Adrenal gland (tissue), 19 donors: ENCODE measurements at regions of chr15 and their contacts with region 1.

Region 1: DNA sequence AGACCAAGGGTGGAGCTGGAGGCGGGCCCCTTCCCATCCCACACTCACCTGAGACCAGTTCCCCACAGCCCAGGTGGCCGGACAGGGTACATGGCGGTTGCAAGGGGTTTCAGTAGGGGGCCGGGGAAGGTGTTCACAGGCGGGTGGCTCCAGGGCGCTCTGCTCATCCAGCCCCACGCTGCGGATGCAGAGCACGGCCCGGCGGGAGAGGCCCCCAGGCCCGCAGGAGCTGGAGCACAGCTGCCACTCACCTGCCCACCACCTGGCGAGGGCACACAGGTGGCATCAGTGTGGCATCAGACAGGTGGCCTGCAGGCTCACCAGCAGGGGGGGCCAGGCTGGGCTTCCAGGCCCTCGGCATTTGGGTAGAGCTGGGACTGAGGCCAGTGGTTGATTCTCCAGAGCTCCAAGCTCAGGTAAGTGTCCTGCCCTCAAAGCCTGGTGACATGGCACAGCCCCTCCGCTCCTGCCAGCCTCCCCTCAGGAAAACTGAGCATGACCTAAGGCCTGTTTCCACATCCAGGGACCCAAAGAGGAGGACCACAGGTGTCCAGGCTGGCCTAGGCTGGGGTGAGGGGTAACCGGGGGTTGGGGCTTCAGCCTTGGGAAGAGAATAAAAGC is 43.8 kb downstream of the ADAMTS7 start:
- DNase-seq: peak in 3 of 7 donors; percentile 10 to 17 (median 15)
- H3K4me3 ChIP-seq: no peak overlapping the region
- H3K27ac ChIP-seq: no peak overlapping the region
- H3K4me1 ChIP-seq: no peaks in the 10 kb centered on the region
- H3K27me3 ChIP-seq: no peaks in the 10 kb centered on the region
- CTCF ChIP-seq: no peak
- POLR2A ChIP-seq: no peak

Region 2: GRCh38 chr15:78103748-78104479 is 663.5 kb before region 1 on chr15:
- intact Hi-C with region 1: no loop called
- DNase-seq: peak in 3 of 7 donors; percentile 30 to 39 (median 34)
- H3K4me3 ChIP-seq: no peak overlapping the region
- H3K27ac ChIP-seq: peak overlapping the region in 2 of 5 donors; percentile 21 to 38
- H3K4me1 ChIP-seq: peaks cover 0 to 15% of the 10 kb centered on the region in 2 donors
- H3K27me3 ChIP-seq: no peaks in the 10 kb centered on the region
- CTCF ChIP-seq: no peak
- POLR2A ChIP-seq: no peak

Region 3: DNA sequence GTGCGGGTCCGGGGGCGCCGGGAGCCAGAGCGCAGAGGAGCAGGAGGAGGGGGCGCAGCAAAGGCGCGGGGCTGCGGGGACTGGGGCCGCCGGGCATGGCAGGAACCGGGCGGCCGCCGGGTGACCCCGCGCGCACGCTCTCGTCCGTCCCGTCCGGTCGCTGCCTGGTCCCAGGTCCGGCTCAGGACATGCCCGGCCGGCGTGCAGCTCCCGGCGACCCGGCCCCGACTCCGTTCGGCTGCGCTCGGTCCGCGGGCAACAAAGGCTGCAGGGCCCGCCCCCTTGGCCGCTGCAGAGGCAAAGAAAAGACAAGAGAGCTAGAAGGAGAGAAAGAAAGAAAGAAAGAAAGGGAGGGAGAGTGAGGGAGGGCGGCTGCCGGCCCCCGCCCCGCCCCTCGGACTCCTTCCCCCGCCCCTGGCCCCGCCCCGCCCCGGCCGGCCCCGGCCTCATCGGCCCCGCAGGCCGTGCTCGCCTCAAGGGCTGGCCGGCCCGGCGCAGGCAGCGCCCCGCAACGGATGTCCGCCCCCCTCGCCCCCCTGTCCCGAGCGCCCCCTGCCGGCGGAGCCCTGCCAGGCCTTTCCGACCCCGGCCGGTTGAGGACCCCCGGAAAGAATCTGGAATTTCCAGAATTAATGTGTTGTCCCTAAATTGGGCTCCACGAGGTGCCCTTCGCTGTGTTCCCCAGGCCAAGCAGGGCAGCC is 43.8 kb after region 1 on chr15 and contains the start of gene ADAMTS7:
- intact Hi-C with region 1: loop called in 1 of 2 experiments (anchors 10 kb)
- DNase-seq: peak; percentile 72 to 80 (median 77)
- H3K4me3 ChIP-seq: peak within 1 kb of the TSS in 3 of 4 donors; percentile 37 to 89 (median 73)
- H3K27ac ChIP-seq: peak within 1 kb of the TSS in 4 of 5 donors; percentile 32 to 90 (median 66)
- H3K4me1 ChIP-seq: peaks cover 5 to 7% of the 10 kb centered on the region in 2 donors
- H3K27me3 ChIP-seq: no peaks in the 10 kb centered on the region
- CTCF ChIP-seq: peak; percentile 43 to 73 (median 57)
- POLR2A ChIP-seq: peak in 1 of 2 donors; percentile 79
- total RNA-seq, gene ADAMTS7: 2.1 to 13.5 (median 9.5) TPM

Region 4: DNA sequence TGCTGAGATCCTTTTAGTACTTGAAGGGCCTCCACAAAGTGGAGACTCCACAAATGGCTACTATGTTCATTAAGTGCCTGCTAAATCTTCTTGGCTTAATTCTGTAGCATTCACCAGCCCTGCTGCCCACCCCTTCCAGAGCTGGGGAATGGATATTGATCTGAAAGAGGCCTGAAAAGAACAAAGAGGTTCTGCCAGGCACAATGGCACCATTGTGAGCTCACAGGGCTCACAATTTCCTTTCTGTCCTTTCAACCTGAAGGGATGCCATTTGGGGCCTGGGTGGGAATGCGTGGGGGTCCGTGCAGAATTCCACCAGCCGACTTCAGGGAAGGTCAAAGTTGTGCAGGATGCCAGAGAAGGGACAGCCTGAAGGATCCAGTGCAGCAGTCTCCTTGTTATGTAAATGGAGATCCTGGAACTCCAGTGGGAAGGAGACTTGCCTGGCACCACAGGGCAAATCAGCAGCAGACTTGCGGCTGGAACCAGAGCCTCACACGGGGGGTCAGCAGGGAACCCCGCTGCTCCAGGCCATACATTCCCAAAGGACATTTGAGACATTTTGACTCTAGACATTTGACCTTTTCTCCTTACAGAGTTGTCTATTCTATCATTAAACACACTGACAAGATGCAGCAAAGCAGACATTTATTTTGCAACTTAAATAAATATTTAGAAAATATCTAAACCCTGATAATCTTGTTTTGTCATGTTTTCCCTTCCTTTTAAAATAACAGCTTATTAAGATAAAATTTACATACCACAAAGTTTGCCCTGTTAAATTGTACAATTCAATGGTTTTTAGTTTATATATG is 83.7 kb after region 1 on chr15:
- intact Hi-C with region 1: no loop called
- DNase-seq: no peak
- H3K4me3 ChIP-seq: no peak overlapping the region
- H3K27ac ChIP-seq: no peak overlapping the region
- H3K4me1 ChIP-seq: no peaks in the 10 kb centered on the region
- H3K27me3 ChIP-seq: no peaks in the 10 kb centered on the region
- CTCF ChIP-seq: no peak
- POLR2A ChIP-seq: no peak